CD4-positive, alpha-beta T cell (primary cell): ENCODE measurements at regions of chr4 and their contacts with region 1.

Region 1: DNA sequence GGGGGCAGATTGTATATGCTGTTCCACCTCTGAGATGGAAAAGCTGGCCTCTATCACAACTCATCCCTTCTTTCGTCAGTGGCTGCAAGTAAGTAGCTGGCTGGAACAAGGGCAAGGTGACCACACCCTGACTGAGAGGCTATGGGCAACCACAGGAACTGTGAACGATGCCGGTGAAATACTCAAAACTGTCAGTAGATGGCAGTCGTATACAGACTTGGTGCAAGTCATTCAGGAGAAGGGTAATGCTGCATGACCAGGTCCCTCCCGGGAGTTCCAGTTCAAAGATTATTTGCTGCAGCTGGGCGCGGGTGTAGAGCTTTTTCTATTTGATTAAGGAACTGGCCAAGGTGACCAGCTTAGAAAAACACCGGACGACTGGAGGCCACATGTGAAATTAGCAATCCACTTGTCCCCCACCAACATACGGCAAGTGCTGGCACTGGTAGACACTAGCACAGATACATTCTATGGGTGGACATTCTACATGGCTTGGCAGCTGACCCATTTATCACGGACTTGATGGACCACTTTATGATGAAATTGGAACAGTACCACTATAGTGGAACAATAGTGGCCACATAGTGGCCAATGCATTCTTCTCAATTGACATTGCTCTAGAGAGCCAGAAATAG is 726.7 kb downstream of the TRAM1L1 start:
- DNase-seq: peak in 4 of 14 experiments; percentile 6 to 42 (median 28)
- ATAC-seq: peak; percentile 44
- H3K4me3 ChIP-seq: no peak overlapping the region
- H3K4me3 Mint-ChIP-seq: no peak overlapping the region
- H3K27ac ChIP-seq: no peak overlapping the region
- H3K27ac Mint-ChIP-seq: no peak overlapping the region
- H3K4me1 ChIP-seq: no peaks in the 10 kb centered on the region
- H3K4me1 Mint-ChIP-seq: no peaks in the 10 kb centered on the region
- H3K27me3 ChIP-seq: no peaks in the 10 kb centered on the region
- H3K27me3 Mint-ChIP-seq: no peaks in the 10 kb centered on the region
- CTCF ChIP-seq: peak; percentile 22

Region 2: DNA sequence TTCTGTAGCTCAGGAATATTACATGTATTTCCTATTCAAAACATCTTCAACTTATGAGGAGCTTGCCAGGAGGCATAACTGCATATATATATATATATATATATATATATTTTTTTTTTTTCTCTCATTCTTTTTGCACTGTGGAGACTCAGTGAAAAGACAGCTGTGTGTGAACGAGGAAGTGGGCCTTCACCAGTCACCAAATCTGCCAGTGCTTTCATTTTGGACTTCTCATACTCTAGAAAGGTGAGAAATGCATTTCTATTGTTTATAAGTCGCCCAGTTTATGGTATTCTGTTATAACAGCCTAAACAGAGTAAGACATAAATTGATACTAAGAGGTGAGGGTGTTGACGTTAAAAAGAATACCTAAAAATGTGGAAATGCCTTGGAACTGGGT is 16.1 kb after region 1 on chr4:
- CTCF ChIA-PET with region 1: no interaction called
- POLR2A ChIA-PET with region 1: no interaction called
- intact Hi-C with region 1: loop called in 1 of 2 experiments (anchors 1 kb)
- DNase-seq: no peak
- ATAC-seq: no peak
- H3K4me3 ChIP-seq: no peak overlapping the region
- H3K4me3 Mint-ChIP-seq: no peak overlapping the region
- H3K27ac ChIP-seq: no peak overlapping the region
- H3K27ac Mint-ChIP-seq: no peak overlapping the region
- H3K4me1 ChIP-seq: no peaks in the 10 kb centered on the region
- H3K4me1 Mint-ChIP-seq: no peaks in the 10 kb centered on the region
- H3K27me3 ChIP-seq: no peaks in the 10 kb centered on the region
- H3K27me3 Mint-ChIP-seq: no peaks in the 10 kb centered on the region
- CTCF ChIP-seq: no peak